ENCODE measurements at regions of chr9 and their contacts with region 1.

Region 1: DNA sequence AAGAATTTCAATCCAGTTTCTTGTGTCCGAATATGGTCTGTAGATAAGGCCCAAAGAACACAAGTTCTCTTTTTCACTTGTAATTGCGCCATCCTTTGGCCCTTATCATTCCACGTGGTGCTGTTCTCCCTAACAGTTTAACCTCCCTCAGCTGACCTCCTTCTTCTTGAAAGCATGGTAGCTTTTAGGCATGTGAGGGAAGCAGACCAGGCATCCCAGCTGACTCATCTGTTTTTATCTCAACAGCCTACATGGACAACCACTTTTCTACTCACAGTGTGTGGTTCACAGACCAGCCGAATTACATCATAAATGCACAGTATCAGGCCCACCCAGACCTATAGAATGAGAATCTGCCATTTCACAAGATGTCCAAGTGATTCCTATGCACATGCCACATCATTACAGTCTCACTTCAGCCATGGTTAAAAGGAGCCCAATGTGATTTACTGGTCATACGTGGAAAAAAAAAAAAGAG is 26.9 kb upstream of the PLIN2 start:
- DNase-seq: no peak
- H3K4me3 ChIP-seq: no peak overlapping the region
- H3K27ac ChIP-seq: no peak overlapping the region
- H3K4me1 ChIP-seq: no peaks in the 10 kb centered on the region
- H3K27me3 ChIP-seq: no peaks in the 10 kb centered on the region; a peak in 1 of 7 replicates
- CTCF ChIP-seq: no peak
- EP300 ChIP-seq: no peak
- POLR2A ChIP-seq: no peak
- RAD21 ChIP-seq: no peak

Region 2: GRCh38 chr9:19022206-19022605 is 132.0 kb before region 1 on chr9:
- CTCF ChIA-PET with region 1: no interaction called
- POLR2A ChIA-PET with region 1: no interaction called
- DNase-seq: no peak
- H3K4me3 ChIP-seq: no peak overlapping the region
- H3K27ac ChIP-seq: no peak overlapping the region
- H3K4me1 ChIP-seq: no peaks in the 10 kb centered on the region
- H3K27me3 ChIP-seq: no peaks in the 10 kb centered on the region
- CTCF ChIP-seq: no peak
- EP300 ChIP-seq: no peak
- POLR2A ChIP-seq: no peak
- RAD21 ChIP-seq: no peak

Region 3: DNA sequence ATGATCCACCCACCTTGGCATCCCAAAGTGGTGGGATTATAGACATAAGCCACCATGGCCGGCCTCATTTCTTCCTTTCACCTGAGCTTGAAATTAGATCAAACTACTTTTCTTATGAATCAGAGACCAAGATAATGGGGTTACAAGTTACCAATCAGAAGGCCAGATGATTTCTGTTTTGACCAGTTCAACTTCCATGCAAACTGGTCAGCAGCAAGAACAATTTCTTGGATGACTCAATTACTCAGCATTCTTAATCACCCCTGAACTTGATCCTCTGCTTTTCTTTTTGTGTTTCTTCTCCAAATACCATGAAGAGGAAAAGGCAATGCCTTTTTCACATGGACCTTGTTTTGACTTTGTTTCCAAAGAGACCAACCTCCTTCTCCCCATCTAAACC is 16.9 kb before region 1 on chr9:
- CTCF ChIA-PET with region 1: interaction called, 11 read pairs
- POLR2A ChIA-PET with region 1: interaction called, 5 read pairs
- DNase-seq: no peak
- H3K4me3 ChIP-seq: no peak overlapping the region
- H3K27ac ChIP-seq: no peak overlapping the region
- H3K4me1 ChIP-seq: no peaks in the 10 kb centered on the region; a peak in 1 of 7 replicates
- H3K27me3 ChIP-seq: no peaks in the 10 kb centered on the region
- CTCF ChIP-seq: no peak
- EP300 ChIP-seq: no peak
- POLR2A ChIP-seq: no peak
- RAD21 ChIP-seq: no peak